Panc1 (cell line): ENCODE measurements at regions of chr21 and their contacts with region 1.

Region 1: GRCh38 chr21:39363607-39364555 is 15.0 kb upstream of the HMGN1 start:
- DNase-seq: no peak
- ATAC-seq: no peak
- H3K4me3 ChIP-seq: no peak overlapping the region
- H3K27ac ChIP-seq: no peak overlapping the region
- H3K4me1 ChIP-seq: no peaks in the 10 kb centered on the region
- H3K27me3 ChIP-seq: no peaks in the 10 kb centered on the region
- CTCF ChIP-seq: no peak

Region 2: DNA sequence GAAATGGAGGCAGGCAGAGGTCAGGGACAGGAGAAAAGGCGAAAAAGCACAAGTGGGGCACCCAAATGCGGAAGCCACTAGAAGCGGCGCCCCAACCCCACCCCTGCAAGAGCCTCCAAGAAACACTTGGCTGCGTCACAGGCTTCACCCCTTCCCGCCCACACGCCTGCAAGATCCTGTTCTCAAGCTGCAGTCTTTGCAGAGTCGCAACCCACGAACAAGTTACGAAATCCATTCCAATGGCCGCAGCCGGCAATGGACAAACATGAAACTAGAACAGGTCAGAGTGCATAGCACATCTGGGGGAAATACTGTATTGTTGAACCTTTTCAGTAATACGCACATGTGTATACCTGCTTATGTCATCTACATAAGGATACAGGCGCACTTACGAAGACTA is 284.3 kb before region 1 on chr21:
- CTCF ChIA-PET with region 1: no interaction called
- POLR2A ChIA-PET with region 1: no interaction called
- in situ Hi-C with region 1: no loop called
- intact Hi-C with region 1: no loop called
- DNase-seq: no peak
- ATAC-seq: no peak
- H3K4me3 ChIP-seq: no peak overlapping the region
- H3K27ac ChIP-seq: no peak overlapping the region
- H3K4me1 ChIP-seq: no peaks in the 10 kb centered on the region
- H3K27me3 ChIP-seq: no peaks in the 10 kb centered on the region
- CTCF ChIP-seq: no peak

Region 3: GRCh38 chr21:39209334-39209688 is 154.6 kb before region 1 on chr21:
- CTCF ChIA-PET with region 1: no interaction called
- POLR2A ChIA-PET with region 1: interaction called, 12 read pairs
- in situ Hi-C with region 1: no loop called
- intact Hi-C with region 1: no loop called
- DNase-seq: no peak
- ATAC-seq: no peak
- H3K4me3 ChIP-seq: no peak overlapping the region
- H3K27ac ChIP-seq: no peak overlapping the region
- H3K4me1 ChIP-seq: no peaks in the 10 kb centered on the region
- H3K27me3 ChIP-seq: no peaks in the 10 kb centered on the region
- CTCF ChIP-seq: no peak